GM12878 (cell line): ENCODE measurements at regions of chr11 and their contacts with region 1.

Region 1: DNA sequence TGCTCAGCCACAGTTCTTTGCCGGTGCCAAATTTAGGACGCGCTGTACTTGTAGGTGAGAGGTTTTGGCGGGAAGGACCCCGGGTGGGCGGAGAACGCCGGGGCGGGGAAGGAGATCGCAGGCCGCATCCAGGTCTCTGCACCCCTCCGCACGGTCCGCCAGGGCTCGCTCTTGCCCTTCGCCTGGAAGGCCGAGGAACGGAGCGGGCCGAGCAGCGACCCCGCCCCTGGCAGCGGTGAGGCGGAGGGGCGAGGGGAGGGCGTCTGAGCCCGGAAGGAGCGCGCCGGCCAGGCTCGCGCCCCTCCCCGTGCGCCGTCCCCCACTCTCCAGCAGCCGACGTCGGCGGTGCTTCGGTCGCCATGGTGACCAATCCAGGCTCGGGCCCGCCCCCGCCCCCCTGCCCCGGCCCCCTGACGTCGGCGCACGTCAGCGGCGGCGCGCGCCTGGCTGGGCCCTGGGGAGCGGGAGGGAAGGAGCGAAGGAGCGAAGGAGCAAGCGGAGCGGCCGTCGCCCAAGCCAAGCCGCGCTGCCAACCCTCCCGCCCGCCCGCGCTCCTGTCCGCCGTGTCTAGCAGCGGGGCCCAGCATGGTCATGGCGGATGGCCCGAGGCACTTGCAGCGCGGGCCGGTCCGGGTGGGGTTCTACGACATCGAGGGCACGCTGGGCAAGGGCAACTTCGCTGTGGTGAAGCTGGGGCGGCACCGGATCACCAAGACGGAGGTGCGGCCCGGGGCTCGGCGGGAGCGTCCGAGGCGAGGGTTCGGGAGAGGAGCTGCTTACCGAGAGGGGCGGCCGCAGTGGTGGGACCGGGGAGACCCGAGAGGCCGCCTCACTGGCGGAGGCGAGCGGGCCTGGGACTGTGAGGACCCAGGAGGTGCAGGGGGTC is at the start of gene SIK2:
- DNase-seq: peak; percentile 88
- ATAC-seq: peak; percentile 87
- H3K4me3 ChIP-seq: peak within 1 kb of the TSS; percentile 93
- H3K27ac ChIP-seq: peak within 1 kb of the TSS; percentile 74
- H3K4me1 ChIP-seq: peaks cover 13% of the 10 kb centered on the region
- H3K27me3 ChIP-seq: no peaks in the 10 kb centered on the region
- CTCF ChIP-seq: peak; percentile 91 to 99 (median 99); a peak in 5 of 6 replicates
- EP300 ChIP-seq: 0 out of 4 replicates have a peak, but pooled peaks of 1 of the 2 experiments have one; percentile 9
- POLR2A ChIP-seq: peak; percentile 67; the same call in 1 of the 2 replicates
- RAD21 ChIP-seq: peak; percentile 97
- polyA plus RNA-seq, gene SIK2: 0.97 to 1.1 TPM

Region 2: GRCh38 chr11:111612224-111612623 is 10.0 kb after region 1 on chr11:
- CTCF ChIA-PET with region 1: interaction called, 12 read pairs
- POLR2A ChIA-PET with region 1: no interaction called
- RAD21 ChIA-PET with region 1: interaction called, 4 read pairs
- SMC1A ChIA-PET with region 1: interaction called, 5 read pairs
- in situ Hi-C with region 1: no loop called
- intact Hi-C with region 1: no loop called
- DNase-seq: no peak
- ATAC-seq: no peak
- H3K4me3 ChIP-seq: no peak overlapping the region
- H3K27ac ChIP-seq: no peak overlapping the region
- H3K4me1 ChIP-seq: no peaks in the 10 kb centered on the region
- H3K27me3 ChIP-seq: no peaks in the 10 kb centered on the region
- CTCF ChIP-seq: no peak
- EP300 ChIP-seq: no peak
- POLR2A ChIP-seq: no peak
- RAD21 ChIP-seq: no peak

Region 3: DNA sequence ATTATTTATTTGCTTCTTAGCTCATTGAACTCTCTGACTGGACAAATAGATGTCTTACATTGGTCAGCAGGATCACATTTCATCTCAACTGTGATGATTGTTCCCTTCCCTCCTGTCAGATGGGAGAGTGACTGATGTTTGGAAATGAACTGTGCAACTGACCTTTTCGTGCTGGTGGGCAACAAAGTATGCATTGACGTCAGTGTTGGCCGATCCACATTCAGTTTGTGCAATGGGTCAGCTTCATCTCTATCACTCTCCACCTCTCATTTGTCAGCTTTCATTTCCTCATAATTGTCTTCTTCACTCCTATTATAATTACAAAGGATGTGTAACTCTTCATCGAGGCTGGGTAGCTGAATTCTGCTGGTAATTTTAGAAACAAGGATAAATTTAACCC is 92.6 kb after region 1 on chr11:
- CTCF ChIA-PET with region 1: interaction called, 50 read pairs
- POLR2A ChIA-PET with region 1: interaction called, 5 read pairs
- RAD21 ChIA-PET with region 1: interaction called, 15 read pairs
- SMC1A ChIA-PET with region 1: interaction called, 19 read pairs
- in situ Hi-C with region 1: no loop called
- intact Hi-C with region 1: loop called (anchors 2 kb)
- DNase-seq: no peak
- ATAC-seq: peak; percentile 72
- H3K4me3 ChIP-seq: no peak overlapping the region
- H3K27ac ChIP-seq: no peak overlapping the region
- H3K4me1 ChIP-seq: peaks cover 14% of the 10 kb centered on the region
- H3K27me3 ChIP-seq: no peaks in the 10 kb centered on the region
- CTCF ChIP-seq: no peak
- EP300 ChIP-seq: peak; percentile 51 to 71; a peak in 2 of 4 replicates
- POLR2A ChIP-seq: no peak
- RAD21 ChIP-seq: no peak

Region 4: GRCh38 chr11:111718436-111718835 is 116.2 kb after region 1 on chr11:
- CTCF ChIA-PET with region 1: interaction called, 9 read pairs
- POLR2A ChIA-PET with region 1: no interaction called
- RAD21 ChIA-PET with region 1: interaction called, 6 read pairs
- SMC1A ChIA-PET with region 1: interaction called, 5 read pairs
- in situ Hi-C with region 1: no loop called
- intact Hi-C with region 1: loop called (anchors 5 kb)
- DNase-seq: no peak
- ATAC-seq: no peak
- H3K4me3 ChIP-seq: no peak overlapping the region
- H3K27ac ChIP-seq: no peak overlapping the region
- H3K4me1 ChIP-seq: peaks cover 11% of the 10 kb centered on the region
- H3K27me3 ChIP-seq: no peaks in the 10 kb centered on the region
- CTCF ChIP-seq: no peak
- EP300 ChIP-seq: no peak
- POLR2A ChIP-seq: no peak
- RAD21 ChIP-seq: no peak

Region 5: DNA sequence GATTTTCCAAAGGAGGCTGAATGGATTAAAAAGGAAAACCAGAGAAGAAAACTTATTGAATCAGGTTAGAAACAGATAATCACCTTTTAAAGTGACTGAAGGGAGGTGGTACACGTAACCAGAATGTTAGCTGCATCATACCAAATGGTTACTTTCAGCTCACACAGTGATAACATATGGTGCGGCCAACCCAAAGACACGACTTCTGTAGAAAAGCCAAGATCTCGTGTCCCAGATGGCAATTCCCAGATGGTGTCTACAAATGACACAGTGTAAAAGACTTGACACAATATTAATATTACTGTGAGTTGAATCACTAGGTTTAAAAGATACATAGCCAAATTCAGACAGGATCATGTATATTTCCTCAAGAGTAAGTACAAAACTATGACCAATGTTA is 158.8 kb after region 1 on chr11:
- CTCF ChIA-PET with region 1: interaction called, 174 read pairs
- POLR2A ChIA-PET with region 1: interaction called, 36 read pairs
- RAD21 ChIA-PET with region 1: interaction called, 90 read pairs
- SMC1A ChIA-PET with region 1: interaction called, 42 read pairs
- in situ Hi-C with region 1: no loop called
- intact Hi-C with region 1: loop called (anchors 2 kb)
- DNase-seq: no peak
- ATAC-seq: no peak
- H3K4me3 ChIP-seq: no peak overlapping the region
- H3K27ac ChIP-seq: no peak overlapping the region
- H3K4me1 ChIP-seq: no peaks in the 10 kb centered on the region
- H3K27me3 ChIP-seq: no peaks in the 10 kb centered on the region
- CTCF ChIP-seq: no peak
- EP300 ChIP-seq: no peak
- POLR2A ChIP-seq: no peak
- RAD21 ChIP-seq: no peak

Region 6: DNA sequence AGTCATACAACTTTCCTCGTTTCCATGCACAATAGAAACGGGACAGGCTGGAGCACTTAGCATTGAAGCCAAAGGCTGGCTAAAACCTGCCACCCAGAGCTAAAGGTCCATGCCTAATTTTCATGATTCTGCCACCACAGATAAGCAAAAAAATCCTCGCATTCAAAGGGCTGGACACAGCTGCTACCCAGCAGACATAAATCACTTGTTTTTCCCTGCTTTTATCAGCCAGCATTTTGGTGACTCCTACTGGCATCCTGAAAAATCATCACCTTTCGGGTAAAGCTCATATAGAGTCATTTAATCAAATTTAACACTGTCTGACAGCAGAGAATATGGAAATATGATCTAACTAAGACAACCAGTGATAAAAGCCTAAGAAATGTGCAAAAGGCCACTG is 231.3 kb after region 1 on chr11:
- CTCF ChIA-PET with region 1: interaction called, 4 read pairs
- POLR2A ChIA-PET with region 1: interaction called, 8 read pairs
- RAD21 ChIA-PET with region 1: interaction called, 12 read pairs
- SMC1A ChIA-PET with region 1: interaction called, 7 read pairs
- in situ Hi-C with region 1: no loop called
- intact Hi-C with region 1: no loop called
- DNase-seq: no peak
- ATAC-seq: no peak
- H3K4me3 ChIP-seq: no peak overlapping the region
- H3K27ac ChIP-seq: no peak overlapping the region
- H3K4me1 ChIP-seq: peaks cover 20% of the 10 kb centered on the region
- H3K27me3 ChIP-seq: no peaks in the 10 kb centered on the region
- CTCF ChIP-seq: no peak
- EP300 ChIP-seq: no peak
- POLR2A ChIP-seq: no peak
- RAD21 ChIP-seq: no peak

Region 7: GRCh38 chr11:111960916-111961315 is 358.7 kb after region 1 on chr11:
- CTCF ChIA-PET with region 1: no interaction called
- POLR2A ChIA-PET with region 1: no interaction called
- RAD21 ChIA-PET with region 1: no interaction called
- SMC1A ChIA-PET with region 1: no interaction called
- in situ Hi-C with region 1: no loop called
- intact Hi-C with region 1: no loop called
- DNase-seq: no peak
- ATAC-seq: no peak
- H3K4me3 ChIP-seq: no peak overlapping the region
- H3K27ac ChIP-seq: no peak overlapping the region
- H3K4me1 ChIP-seq: no peaks in the 10 kb centered on the region
- H3K27me3 ChIP-seq: no peaks in the 10 kb centered on the region
- CTCF ChIP-seq: no peak
- EP300 ChIP-seq: no peak
- POLR2A ChIP-seq: no peak
- RAD21 ChIP-seq: no peak

Region 8: GRCh38 chr11:111982019-111982464 is 379.8 kb after region 1 on chr11:
- CTCF ChIA-PET with region 1: no interaction called
- POLR2A ChIA-PET with region 1: no interaction called
- RAD21 ChIA-PET with region 1: no interaction called
- SMC1A ChIA-PET with region 1: no interaction called
- in situ Hi-C with region 1: no loop called
- intact Hi-C with region 1: loop called (anchors 10 kb)
- DNase-seq: peak; percentile 5
- ATAC-seq: peak; percentile 96
- H3K4me3 ChIP-seq: no peak overlapping the region
- H3K27ac ChIP-seq: no peak overlapping the region
- H3K4me1 ChIP-seq: peaks cover 4% of the 10 kb centered on the region
- H3K27me3 ChIP-seq: peaks cover 3 to 8% of the 10 kb centered on the region in 2 experiments; a peak in 2 of 4 replicates
- CTCF ChIP-seq: peak; percentile 70 to 78 (median 74)
- EP300 ChIP-seq: no peak
- POLR2A ChIP-seq: no peak
- RAD21 ChIP-seq: peak; percentile 79